ENCODE measurements at regions of chr18 and their contacts with region 1.

Region 1: DNA sequence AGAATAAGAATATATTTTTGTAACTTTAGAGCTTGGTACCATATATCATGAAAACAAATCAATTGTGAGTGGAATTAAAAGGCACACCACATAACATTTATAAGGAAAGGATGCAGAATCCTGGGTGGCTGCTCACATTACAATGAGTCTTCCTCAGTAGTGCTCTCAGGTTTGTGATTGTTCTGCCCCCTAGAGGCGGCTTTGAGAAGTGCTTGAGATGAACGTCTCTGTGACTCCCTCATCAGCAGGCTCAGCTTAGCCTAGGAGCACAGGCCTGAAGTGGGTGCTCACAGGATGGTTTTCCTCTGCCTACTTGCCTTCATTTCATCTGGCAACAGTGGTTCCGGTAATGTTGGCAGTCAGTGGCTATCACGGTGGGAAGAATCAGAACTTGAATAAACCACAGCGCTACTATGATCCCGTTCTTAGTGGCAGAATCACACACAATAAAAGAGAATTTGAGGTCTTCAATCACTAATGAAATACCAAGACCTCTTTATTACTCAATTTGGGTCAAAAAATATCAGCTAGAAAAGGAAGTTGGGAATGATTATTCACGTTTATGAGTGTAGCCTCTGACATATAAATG is 38.1 kb upstream of the B4GALT6 start:
- DNase-seq: peak; percentile 60 to 80
- ATAC-seq: peak; percentile 99

Region 2: DNA sequence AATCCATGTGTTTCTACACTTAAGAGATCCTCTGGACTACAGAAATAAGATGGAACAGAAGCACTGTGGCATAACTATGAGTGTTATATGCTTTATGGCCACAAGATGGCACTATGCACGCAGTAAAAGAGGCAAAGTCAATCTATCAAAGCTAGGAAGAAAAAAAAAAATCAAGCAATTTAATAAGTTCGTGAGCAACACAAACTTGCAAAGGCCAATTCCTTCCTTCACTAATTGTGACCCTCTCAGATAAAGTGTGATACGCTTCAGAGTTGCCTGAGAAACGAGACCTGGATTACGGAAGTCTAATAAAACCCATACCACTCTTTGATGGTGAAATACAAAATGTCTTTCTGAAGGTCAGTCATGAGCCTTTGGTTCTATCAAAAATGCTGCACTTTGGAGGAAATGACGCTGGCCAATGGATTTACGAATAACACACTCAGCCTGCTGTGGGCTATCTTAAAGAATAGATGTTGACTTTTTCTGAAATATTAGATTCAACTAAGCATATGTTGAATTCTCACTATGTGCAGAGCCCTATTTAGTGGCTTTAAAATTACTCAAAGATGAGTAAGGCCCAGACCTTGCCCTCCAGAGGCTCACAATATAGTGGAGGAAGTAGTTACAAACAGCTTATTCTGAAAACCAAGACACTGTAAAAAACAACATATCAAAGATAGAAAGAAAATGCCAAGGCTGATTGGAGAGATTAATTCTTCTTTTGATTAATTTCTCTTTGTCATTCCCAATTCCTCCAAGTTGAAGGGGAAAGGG is 166.3 kb before region 1 on chr18:
- intact Hi-C with region 1: loop called in 1 of 2 experiments (anchors 5 kb)
- DNase-seq: no peak
- ATAC-seq: peak; percentile 69

Region 3: DNA sequence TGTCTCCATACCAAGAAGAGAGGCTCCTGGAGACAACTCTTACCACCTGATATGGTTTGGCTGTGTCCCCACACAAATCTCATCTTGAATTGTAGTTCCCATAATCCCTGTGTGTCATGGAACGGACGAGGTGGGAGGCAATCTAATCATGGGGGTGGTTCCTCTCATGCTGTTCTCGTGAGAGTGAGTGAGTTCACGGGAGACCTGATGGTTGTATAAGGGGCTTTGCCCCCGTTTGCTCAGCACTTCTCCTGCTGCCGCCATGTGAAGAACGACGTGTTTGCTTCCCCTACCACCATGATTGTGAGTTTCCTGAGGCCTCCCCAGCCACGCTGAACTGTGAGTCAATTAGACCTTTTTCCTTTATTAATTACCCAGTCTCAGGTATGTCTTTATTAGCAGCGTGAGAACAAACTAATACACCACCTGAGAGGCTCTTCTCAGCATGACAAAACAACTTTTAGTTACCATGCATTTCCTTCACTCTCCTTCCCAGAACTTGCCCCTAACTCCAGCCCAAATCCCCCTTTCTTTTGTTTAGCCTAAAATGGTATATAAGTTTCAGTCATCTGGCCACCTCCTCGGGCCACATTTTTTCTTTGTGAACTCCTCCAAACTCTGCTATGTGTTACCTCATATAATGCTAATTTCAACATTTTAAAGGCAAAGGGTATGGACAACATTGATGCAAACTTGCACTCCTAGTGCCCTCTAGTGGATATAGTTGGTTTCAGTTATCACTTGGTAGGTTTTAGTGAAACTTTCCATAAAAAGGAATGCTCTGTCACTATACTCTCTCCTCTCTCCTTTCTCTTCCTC is 96.9 kb after region 1 on chr18:
- intact Hi-C with region 1: loop called in 1 of 2 experiments (anchors 5 kb)
- DNase-seq: no peak
- ATAC-seq: peak; percentile 62

Measured in left colon (tissue), 2 donors.